ENCODE measurements at regions of chr2 and their contacts with region 1.

Region 1: DNA sequence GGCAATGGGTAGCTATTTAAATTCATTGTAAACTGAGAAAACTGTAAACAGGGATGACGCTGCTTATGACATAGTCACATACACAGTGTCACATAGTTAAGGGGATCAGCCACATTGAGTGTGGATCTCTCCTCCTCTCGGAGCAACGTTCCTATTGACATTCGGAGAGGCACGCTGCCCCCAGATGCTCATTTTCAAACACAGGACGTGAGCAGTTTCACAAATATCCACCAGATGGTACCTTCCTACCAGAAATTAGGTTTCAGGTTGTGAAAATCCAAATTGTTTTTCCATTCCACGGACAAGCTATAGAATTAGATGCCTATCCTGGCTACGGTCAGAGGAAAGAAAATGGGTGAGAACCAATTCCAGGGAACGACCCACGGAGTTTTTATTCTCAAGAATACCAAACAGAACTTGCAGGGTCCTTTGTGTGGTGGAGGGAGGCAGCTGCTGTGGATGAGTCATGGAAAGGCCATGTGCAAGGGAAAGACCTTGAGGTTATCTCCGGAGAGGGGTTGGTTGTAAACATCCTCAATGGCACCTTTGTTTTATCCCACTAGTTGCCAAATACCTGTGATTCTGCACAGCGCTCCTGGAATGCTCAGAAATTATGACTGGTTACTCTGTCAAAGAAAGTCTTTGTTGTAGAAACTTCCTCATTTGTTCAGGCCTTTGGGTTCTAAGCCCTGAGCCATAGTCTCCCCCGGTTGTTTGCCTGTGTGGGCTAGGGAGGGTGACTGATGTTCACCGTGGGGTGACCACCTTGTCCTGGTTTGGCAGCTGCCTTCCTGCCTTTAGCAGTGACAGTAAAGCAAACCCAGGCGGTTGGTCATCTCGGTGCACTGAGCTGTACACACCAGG is 88.0 kb downstream of the ACTR3 start:
- DNase-seq: no peak
- H3K4me3 ChIP-seq: peak overlapping the region in 22 of 59 donors; percentile 1 to 30 (median 14)
- H3K27ac ChIP-seq: peak overlapping the region in 1 of 59 donors; percentile 31
- H3K27me3 ChIP-seq: no peaks in the 10 kb centered on the region
- CTCF ChIP-seq: peak in 54 of 56 donors; percentile 26 to 73 (median 54)

Region 2: DNA sequence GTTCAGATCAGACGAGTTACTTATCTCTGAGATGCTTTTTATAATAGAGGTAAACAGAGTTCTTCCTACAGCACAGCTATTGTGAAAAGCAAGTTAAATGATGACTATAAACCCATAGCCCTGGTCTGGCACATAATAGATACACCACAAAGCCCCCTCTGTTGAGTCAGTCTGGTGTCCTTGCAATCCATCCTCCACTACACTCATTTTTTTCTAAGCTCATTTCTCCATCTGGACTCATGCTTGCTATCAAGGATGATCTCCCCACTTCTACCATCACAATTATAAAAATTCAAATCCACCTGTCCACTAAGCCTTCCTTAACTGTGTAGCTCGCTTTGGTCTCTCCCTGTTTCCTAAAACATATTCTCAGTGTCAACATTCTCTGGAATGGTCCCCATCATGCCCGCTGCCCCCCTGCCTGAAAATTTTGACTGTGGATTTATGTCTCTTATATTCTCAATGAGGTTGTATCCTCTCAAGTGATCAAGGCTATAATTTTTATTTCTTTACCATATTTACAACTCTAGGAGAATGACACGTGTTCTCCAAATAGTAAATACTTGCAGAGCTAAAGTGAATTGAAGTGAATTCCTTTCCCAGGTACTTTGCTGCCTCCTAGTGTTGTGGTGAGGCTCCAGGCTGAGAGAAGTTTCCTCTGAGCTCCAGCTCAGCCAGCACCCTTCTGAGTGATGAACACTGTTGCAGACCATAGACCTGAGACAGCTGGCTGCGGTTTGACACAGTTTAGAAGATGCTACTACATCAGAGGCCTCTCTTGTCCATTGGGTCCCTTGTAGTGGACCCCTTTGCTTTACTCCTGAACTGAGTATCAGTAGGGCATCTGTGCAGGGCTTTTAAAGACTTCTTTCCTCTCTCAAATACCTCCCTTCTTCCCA is 573.3 kb after region 1 on chr2:
- intact Hi-C with region 1: loop called (anchors 5 kb)
- DNase-seq: peak in 7 of 10 donors; percentile 9 to 66 (median 49)
- H3K4me3 ChIP-seq: no peak overlapping the region
- H3K27ac ChIP-seq: no peak overlapping the region
- H3K27me3 ChIP-seq: peaks cover 0 to 10% (median 0%) of the 10 kb centered on the region in 45 donors
- CTCF ChIP-seq: peak in 55 of 56 donors; percentile 14 to 81 (median 64)